ENCODE measurements at regions of chr7 and their contacts with region 1.

Region 1: DNA sequence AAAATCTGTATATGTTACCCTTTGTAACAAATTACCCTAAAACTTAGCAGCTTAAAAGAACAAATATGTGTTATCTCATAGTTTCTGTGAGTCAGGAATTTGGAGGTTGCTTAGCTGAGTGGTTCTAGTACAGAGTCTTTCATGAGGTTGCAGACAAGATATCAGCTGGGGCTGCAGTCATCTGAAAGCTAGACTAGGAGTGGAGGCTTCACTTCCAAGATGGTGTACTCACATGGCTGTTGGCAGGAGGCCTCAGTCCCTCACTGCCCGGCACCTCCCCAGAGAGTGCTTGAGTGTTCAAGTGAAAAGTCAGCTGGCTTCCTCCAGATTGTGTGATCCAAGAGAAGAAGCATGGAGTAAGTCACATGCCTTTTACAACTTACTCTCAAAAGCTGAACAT is 16.9 kb upstream of the GGCT start:
- DNase-seq: no peak
- H3K4me3 ChIP-seq: no peak overlapping the region
- H3K27ac ChIP-seq: no peak overlapping the region
- H3K4me1 ChIP-seq: no peaks in the 10 kb centered on the region; a peak in 1 of 4 replicates
- H3K27me3 ChIP-seq: no peaks in the 10 kb centered on the region
- CTCF ChIP-seq: no peak
- EP300 ChIP-seq: no peak
- RAD21 ChIP-seq: no peak

Region 2: DNA sequence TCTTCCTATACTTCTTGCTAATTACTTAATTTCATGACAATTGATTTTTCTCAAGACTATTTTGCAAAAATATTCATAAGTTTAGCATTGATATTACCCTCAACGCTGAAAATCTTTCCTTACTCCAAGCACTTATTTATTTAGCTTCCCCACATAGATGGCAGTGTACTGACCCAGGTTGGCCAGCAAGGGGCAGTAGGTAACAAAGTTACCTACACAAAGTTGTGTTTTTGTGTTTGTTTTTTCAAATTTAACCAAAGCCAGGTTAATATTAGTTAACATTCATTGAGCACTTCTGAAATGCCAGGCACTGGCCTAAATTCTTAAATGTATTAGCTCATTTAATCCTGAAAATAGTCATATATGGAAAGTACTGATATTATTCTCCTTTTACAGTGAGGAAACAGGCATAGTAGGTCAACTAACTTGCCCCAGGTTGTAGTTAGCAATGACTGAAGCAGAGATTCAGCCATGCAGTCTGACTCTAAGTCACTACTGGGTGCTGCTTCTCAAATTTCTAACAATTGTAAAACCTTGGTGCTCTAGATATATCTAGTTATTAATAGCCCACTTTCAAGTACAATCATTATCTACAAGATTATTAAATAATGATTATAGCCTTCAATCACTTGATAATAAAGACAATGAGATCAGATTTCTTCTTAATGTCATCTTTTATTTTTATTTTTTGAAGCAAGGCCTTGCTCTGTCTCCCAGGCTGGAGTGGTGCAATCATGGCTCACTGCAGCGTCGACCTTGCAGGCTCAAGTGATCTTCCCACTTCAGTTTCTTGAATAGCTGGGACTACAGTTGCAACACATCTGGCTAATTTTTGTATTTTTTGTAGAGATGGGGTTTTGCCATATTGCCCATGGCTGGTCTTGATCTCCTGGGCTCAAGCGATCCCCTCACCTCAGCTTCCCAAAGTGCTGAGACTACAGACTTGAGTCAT is 11.1 kb before region 1 on chr7:
- CTCF ChIA-PET with region 1: interaction called, 24 read pairs
- POLR2A ChIA-PET with region 1: no interaction called
- DNase-seq: peak; percentile 52
- H3K4me3 ChIP-seq: no peak overlapping the region
- H3K27ac ChIP-seq: 0 out of 4 replicates have a peak overlapping the region, but pooled peaks of 1 of the 2 experiments have one; percentile 67
- H3K4me1 ChIP-seq: peaks cover 0 to 10% of the 10 kb centered on the region in 2 experiments; a peak in 2 of 4 replicates
- H3K27me3 ChIP-seq: no peaks in the 10 kb centered on the region
- CTCF ChIP-seq: peak; percentile 96
- EP300 ChIP-seq: no peak
- RAD21 ChIP-seq: peak; percentile 72

Measured in SK-N-SH (cell line).